Right cardiac atrium (tissue), 5 donors: ENCODE measurements at regions of chr1 and their contacts with region 1.

Region 1: GRCh38 chr1:64675718-64676345 is 69.0 kb upstream of the RAVER2 start:
- DNase-seq: no peak
- ATAC-seq: no peak
- H3K4me3 ChIP-seq: no peak overlapping the region
- H3K27ac ChIP-seq: no peak overlapping the region
- H3K4me1 ChIP-seq: no peaks in the 10 kb centered on the region
- H3K27me3 ChIP-seq: no peaks in the 10 kb centered on the region

Region 2: GRCh38 chr1:64121766-64122385 is 554.0 kb before region 1 on chr1:
- intact Hi-C with region 1: no loop called
- DNase-seq: no peak
- ATAC-seq: no peak
- H3K4me3 ChIP-seq: no peak overlapping the region
- H3K27ac ChIP-seq: no peak overlapping the region
- H3K4me1 ChIP-seq: peaks cover 2% of the 10 kb centered on the region
- H3K27me3 ChIP-seq: no peaks in the 10 kb centered on the region

Region 3: GRCh38 chr1:64263335-64263734 is 412.5 kb before region 1 on chr1:
- intact Hi-C with region 1: loop called in 3 of 4 experiments (anchors 5 to 10 kb)
- DNase-seq: no peak
- ATAC-seq: no peak
- H3K4me3 ChIP-seq: no peak overlapping the region
- H3K27ac ChIP-seq: no peak overlapping the region
- H3K4me1 ChIP-seq: peaks cover 2% of the 10 kb centered on the region
- H3K27me3 ChIP-seq: no peaks in the 10 kb centered on the region

Region 4: DNA sequence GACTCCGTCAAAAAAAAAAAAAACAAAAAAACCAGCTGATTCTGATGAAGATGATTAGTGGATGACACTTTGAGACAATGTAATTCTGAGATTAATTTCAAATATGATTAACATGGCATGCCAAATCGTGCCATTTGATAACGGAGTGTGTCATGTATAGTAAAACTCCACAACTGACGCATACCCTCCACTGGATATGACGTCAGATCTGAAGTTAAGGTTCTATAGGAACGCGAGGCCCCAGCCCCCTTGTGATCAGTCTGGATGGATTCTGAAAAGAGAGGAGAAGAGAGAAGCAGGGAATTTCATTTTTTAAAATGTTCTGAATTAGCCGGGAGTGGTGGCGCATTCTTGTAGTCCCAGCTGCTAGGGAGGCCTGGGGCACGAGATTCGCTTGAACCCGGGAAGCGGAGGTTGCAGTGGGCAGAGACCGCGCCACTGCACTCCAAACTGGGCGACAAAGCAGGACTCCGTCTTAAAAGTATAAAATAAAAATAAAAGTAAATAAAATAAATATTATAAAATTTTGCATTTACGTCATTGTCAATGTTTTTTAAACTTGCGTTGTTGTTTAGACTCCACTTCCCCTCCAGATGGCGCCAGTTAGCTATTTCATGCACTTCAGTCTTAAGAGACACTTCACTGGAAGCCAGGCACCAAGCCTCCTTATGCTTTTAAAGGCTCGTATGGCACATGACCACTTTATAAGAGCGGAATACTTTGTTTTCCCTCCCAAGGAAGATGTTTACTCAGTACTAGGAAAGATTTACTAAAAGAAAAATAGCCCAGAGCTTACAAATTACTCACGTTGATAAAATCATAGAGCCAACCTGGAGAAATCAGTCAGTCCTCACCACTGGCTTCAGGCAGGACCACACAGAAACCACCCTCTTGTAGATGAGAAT is 406.9 kb before region 1 on chr1:
- intact Hi-C with region 1: loop called in 3 of 4 experiments (anchors 5 to 10 kb)
- DNase-seq: peak in 2 of 3 donors; percentile 59 to 65
- ATAC-seq: peak; percentile 72 to 77
- H3K4me3 ChIP-seq: no peak overlapping the region
- H3K27ac ChIP-seq: no peak overlapping the region
- H3K4me1 ChIP-seq: no peaks in the 10 kb centered on the region
- H3K27me3 ChIP-seq: no peaks in the 10 kb centered on the region

Region 5: GRCh38 chr1:64632936-64633335 is 42.9 kb before region 1 on chr1:
- intact Hi-C with region 1: no loop called
- DNase-seq: peak in 1 of 3 donors; percentile 43
- ATAC-seq: no peak
- H3K4me3 ChIP-seq: no peak overlapping the region
- H3K27ac ChIP-seq: no peak overlapping the region
- H3K4me1 ChIP-seq: peaks cover 2% of the 10 kb centered on the region
- H3K27me3 ChIP-seq: no peaks in the 10 kb centered on the region

Region 6: DNA sequence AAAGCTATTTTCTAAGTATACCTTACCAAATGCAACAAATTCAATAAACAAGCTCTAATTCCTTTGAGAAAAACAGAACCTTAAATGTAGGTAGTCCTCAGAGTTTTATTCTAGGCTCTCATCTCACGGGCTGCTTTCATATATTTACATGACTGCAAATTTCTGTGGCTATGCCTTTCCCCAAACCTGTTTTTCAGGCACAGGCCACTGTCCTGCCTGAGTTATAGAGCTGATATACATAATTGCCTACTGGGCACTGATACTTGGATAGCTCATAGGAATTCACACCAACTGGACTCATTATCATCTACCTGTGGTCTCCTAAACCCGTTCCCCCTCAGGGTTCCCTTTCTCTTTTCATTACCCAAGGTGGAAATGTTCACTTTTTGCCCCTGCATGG is 48.0 kb after region 1 on chr1:
- intact Hi-C with region 1: no loop called
- DNase-seq: no peak
- ATAC-seq: no peak
- H3K4me3 ChIP-seq: no peak overlapping the region
- H3K27ac ChIP-seq: no peak overlapping the region
- H3K4me1 ChIP-seq: no peaks in the 10 kb centered on the region
- H3K27me3 ChIP-seq: no peaks in the 10 kb centered on the region